ENCODE measurements at regions of chr21 and their contacts with region 1.

Region 1: GRCh38 chr21:22575165-22575584 is 1577.0 kb downstream of the NCAM2 start:
- DNase-seq: no peak
- ATAC-seq: no peak
- H3K4me3 ChIP-seq: no peak overlapping the region
- H3K27ac ChIP-seq: no peak overlapping the region
- H3K4me1 ChIP-seq: no peaks in the 10 kb centered on the region
- H3K27me3 ChIP-seq: no peaks in the 10 kb centered on the region
- CTCF ChIP-seq: peak in 10 of 12 donors; percentile 11 to 51 (median 26)
- POLR2A ChIP-seq: no peak

Region 2: DNA sequence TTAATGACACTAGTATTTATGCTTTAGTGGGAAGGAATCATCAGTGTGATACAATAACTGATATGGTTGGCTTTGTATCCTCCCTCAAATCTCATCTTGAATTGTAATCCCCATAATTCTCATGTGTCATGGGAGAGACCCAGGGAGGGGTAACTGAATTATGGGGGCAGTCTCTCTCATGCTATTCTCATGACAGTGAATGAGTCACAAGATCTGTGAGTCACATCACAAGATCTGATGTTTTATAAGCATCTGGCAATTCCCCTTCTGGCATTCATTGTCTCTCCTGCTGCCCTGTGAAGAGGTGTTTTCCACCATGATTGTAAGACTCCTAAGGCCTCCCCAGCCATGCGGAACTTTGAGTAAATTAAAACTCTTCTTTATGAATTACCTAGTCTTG is 183.3 kb after region 1 on chr21:
- intact Hi-C with region 1: no loop called
- DNase-seq: no peak
- ATAC-seq: no peak
- H3K4me3 ChIP-seq: no peak overlapping the region
- H3K27ac ChIP-seq: no peak overlapping the region
- H3K4me1 ChIP-seq: no peaks in the 10 kb centered on the region
- H3K27me3 ChIP-seq: no peaks in the 10 kb centered on the region
- CTCF ChIP-seq: no peak
- POLR2A ChIP-seq: no peak

Region 3: GRCh38 chr21:22791986-22792560 is 216.9 kb after region 1 on chr21:
- intact Hi-C with region 1: loop called in 4 of 10 experiments (anchors 2 to 10 kb)
- DNase-seq: no peak
- ATAC-seq: no peak
- H3K4me3 ChIP-seq: no peak overlapping the region
- H3K27ac ChIP-seq: no peak overlapping the region
- H3K4me1 ChIP-seq: no peaks in the 10 kb centered on the region
- H3K27me3 ChIP-seq: no peaks in the 10 kb centered on the region
- CTCF ChIP-seq: peak; percentile 68 to 90 (median 81)
- POLR2A ChIP-seq: no peak